CD14-positive monocyte (primary cell): ENCODE measurements at regions of chr19 and their contacts with region 1.

Region 1: GRCh38 chr19:49983645-49984229 is 22.8 kb upstream of the SIGLEC11 start:
- DNase-seq: peak; percentile 68 to 80 (median 77)
- H3K4me3 ChIP-seq: no peak overlapping the region
- H3K4me3 Mint-ChIP-seq: no peak overlapping the region
- H3K27ac ChIP-seq: no peak overlapping the region
- H3K27ac Mint-ChIP-seq: peak overlapping the region in 2 of 7 donors; percentile 35 to 69
- H3K4me1 ChIP-seq: peaks cover 0 to 8% of the 10 kb centered on the region in 2 donors
- H3K4me1 Mint-ChIP-seq: peaks cover 10% of the 10 kb centered on the region
- H3K27me3 ChIP-seq: no peaks in the 10 kb centered on the region
- H3K27me3 Mint-ChIP-seq: peaks cover 0 to 7% (median 2%) of the 10 kb centered on the region in 3 donors
- CTCF ChIP-seq: peak; percentile 94

Region 2: GRCh38 chr19:49927526-49928264 is 56.0 kb before region 1 on chr19:
- intact Hi-C with region 1: no loop called
- DNase-seq: peak in 1 of 3 donors; percentile 4
- H3K4me3 ChIP-seq: peak overlapping the region in 1 of 3 experiments; percentile 91
- H3K4me3 Mint-ChIP-seq: peak overlapping the region; percentile 90 to 97
- H3K27ac ChIP-seq: peak overlapping the region; percentile 88 to 95
- H3K27ac Mint-ChIP-seq: peak overlapping the region; percentile 93 to 100 (median 97)
- H3K4me1 ChIP-seq: peaks cover 48 to 70% of the 10 kb centered on the region in 2 donors
- H3K4me1 Mint-ChIP-seq: peaks cover 58% of the 10 kb centered on the region
- H3K27me3 ChIP-seq: no peaks in the 10 kb centered on the region
- H3K27me3 Mint-ChIP-seq: peaks cover 0 to 6% (median 0%) of the 10 kb centered on the region in 3 donors
- CTCF ChIP-seq: no peak

Region 3: GRCh38 chr19:49937750-49938381 is 45.9 kb before region 1 on chr19:
- intact Hi-C with region 1: loop called (anchors 1 kb)
- DNase-seq: peak; percentile 69 to 77 (median 76)
- H3K4me3 ChIP-seq: peak overlapping the region in 1 of 3 experiments; percentile 52
- H3K4me3 Mint-ChIP-seq: peak overlapping the region in 1 of 2 donors; percentile 4
- H3K27ac ChIP-seq: no peak overlapping the region
- H3K27ac Mint-ChIP-seq: no peak overlapping the region
- H3K4me1 ChIP-seq: peaks cover 14 to 16% of the 10 kb centered on the region in 2 donors
- H3K4me1 Mint-ChIP-seq: peaks cover 21% of the 10 kb centered on the region
- H3K27me3 ChIP-seq: no peaks in the 10 kb centered on the region
- H3K27me3 Mint-ChIP-seq: peaks cover 5 to 20% (median 7%) of the 10 kb centered on the region in 3 donors
- CTCF ChIP-seq: peak; percentile 99

Region 4: DNA sequence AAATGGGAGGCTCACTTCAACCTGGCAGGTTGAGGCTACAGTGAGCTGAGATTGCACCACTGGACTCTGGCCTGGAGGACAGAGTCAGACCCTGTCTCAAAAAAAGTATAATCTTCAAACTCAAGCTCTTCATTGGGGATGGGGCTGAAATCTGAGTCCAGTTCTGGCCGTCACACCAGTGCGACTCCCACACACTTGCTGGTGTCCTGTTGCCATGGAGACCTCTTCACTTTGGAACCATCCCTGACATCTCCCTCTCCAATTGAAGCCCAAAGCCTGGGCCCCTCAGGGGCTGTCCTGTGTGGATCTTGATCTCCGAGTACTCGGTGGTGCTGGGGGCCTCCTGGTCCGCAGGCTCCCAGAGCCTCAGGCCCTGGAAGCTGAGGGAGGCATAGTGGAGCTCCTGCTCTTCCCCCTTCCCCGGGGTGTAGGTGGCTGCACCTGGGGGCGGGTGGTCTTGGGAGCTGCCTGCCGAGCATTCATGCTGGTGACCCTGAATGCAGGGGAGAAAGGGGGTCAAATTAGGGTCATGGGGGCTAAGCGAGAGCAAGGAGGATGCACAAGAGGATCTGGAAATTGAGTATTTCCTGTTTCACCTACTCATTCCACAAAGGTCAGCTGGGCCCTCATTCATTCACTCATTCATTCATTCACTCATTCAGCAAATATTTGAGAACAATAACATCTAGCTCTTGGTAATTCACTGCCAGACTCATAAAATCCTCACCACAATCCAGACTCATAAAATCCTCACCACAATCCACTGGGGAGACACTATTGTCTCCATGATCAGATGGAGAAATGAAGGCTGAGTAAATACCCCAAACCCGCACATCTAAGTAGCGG is 33.8 kb before region 1 on chr19:
- intact Hi-C with region 1: no loop called
- DNase-seq: no peak
- H3K4me3 ChIP-seq: no peak overlapping the region
- H3K4me3 Mint-ChIP-seq: no peak overlapping the region
- H3K27ac ChIP-seq: no peak overlapping the region
- H3K27ac Mint-ChIP-seq: peak overlapping the region in 1 of 7 donors; percentile 18
- H3K4me1 ChIP-seq: peaks cover 47 to 50% of the 10 kb centered on the region in 2 donors
- H3K4me1 Mint-ChIP-seq: peaks cover 54% of the 10 kb centered on the region
- H3K27me3 ChIP-seq: no peaks in the 10 kb centered on the region
- H3K27me3 Mint-ChIP-seq: peaks cover 7 to 21% (median 11%) of the 10 kb centered on the region in 3 donors
- CTCF ChIP-seq: no peak

Region 5: GRCh38 chr19:50016225-50016807 is 32.6 kb after region 1 on chr19:
- intact Hi-C with region 1: no loop called
- DNase-seq: no peak
- H3K4me3 ChIP-seq: no peak overlapping the region
- H3K4me3 Mint-ChIP-seq: no peak overlapping the region
- H3K27ac ChIP-seq: no peak overlapping the region
- H3K27ac Mint-ChIP-seq: peak overlapping the region in 1 of 7 donors; percentile 37
- H3K4me1 ChIP-seq: no peaks in the 10 kb centered on the region
- H3K4me1 Mint-ChIP-seq: no peaks in the 10 kb centered on the region
- H3K27me3 ChIP-seq: no peaks in the 10 kb centered on the region
- H3K27me3 Mint-ChIP-seq: peaks cover 0 to 1% (median 0%) of the 10 kb centered on the region in 3 donors
- CTCF ChIP-seq: no peak

Region 6: GRCh38 chr19:50039968-50040367 is 56.2 kb after region 1 on chr19:
- intact Hi-C with region 1: no loop called
- DNase-seq: no peak
- H3K4me3 ChIP-seq: no peak overlapping the region
- H3K4me3 Mint-ChIP-seq: no peak overlapping the region
- H3K27ac ChIP-seq: no peak overlapping the region
- H3K27ac Mint-ChIP-seq: peak overlapping the region in 1 of 7 donors; percentile 17
- H3K4me1 ChIP-seq: no peaks in the 10 kb centered on the region
- H3K4me1 Mint-ChIP-seq: no peaks in the 10 kb centered on the region
- H3K27me3 ChIP-seq: no peaks in the 10 kb centered on the region
- H3K27me3 Mint-ChIP-seq: peaks cover 0 to 2% (median 2%) of the 10 kb centered on the region in 3 donors
- CTCF ChIP-seq: no peak